Activated T-helper 1 cell treated with anti-CD3 and anti-CD28 coated beads, Interleukin-12 subunit alpha, Interleukin-12 subunit beta, Interleukin-2, Interleukin-4 antibody, amounts not matched to agents 30 ng/mL and 10 ng/mL and 1 ng/mL, durations not matched to agents 14 hours and 24 hours and 36 hours (primary cell): ENCODE measurements at regions of chr20 and their contacts with region 1.

Region 1: GRCh38 chr20:13638496-13639222 is at the start of gene TASP1:
- DNase-seq: peak; percentile 91
- H3K4me3 Mint-ChIP-seq: peak within 1 kb of the TSS; percentile 97
- H3K27ac Mint-ChIP-seq: peak within 1 kb of the TSS; percentile 71
- H3K4me1 Mint-ChIP-seq: peaks cover 30% of the 10 kb centered on the region
- H3K27me3 Mint-ChIP-seq: peaks cover 11% of the 10 kb centered on the region
- total RNA-seq, gene TASP1: 13.8 and 14.8 TPM in 2 replicates

Region 2: DNA sequence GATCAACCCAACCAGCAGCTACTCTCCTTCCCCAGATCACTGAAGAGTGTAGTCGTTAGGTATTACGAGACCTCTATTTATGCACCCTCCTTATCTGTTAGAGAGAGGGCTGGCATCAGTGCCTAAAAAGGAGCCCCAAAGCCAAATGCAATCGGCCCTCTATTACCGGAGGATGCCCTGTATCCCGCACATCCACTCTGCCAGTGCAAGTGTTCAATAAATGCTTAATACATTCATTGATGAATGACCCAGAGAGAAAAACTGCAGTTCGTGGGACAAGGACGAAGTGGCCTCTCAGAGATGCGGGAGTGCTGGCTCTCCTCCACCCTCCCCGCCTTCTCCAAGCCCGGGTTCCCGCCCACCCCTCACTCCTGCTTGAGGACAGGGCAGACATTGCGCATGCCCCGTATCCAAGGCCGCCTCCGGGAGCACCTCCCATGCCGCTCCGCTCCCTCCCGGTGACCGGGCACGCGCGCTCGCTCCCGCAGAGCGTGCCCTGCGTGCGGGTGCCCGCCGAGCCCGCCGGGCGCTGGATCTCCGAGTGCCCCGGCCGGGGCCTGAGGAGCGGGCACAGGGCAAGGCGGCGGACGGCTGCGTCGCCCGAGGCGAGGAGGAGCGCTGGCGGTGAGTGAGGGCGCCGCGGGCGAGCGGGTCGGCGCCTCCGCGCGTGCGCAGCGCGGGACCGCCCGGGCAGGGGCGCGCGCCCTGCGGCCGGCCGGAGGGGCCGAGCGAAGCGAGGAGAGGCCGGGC is 1748.2 kb before region 1 on chr20:
- intact Hi-C with region 1: loop called (anchors 5 kb)
- DNase-seq: peak; percentile 55
- H3K4me3 Mint-ChIP-seq: peak overlapping the region; percentile 82
- H3K27ac Mint-ChIP-seq: peak overlapping the region; percentile 1
- H3K4me1 Mint-ChIP-seq: peaks cover 25% of the 10 kb centered on the region
- H3K27me3 Mint-ChIP-seq: peaks cover 19% of the 10 kb centered on the region

Region 3: DNA sequence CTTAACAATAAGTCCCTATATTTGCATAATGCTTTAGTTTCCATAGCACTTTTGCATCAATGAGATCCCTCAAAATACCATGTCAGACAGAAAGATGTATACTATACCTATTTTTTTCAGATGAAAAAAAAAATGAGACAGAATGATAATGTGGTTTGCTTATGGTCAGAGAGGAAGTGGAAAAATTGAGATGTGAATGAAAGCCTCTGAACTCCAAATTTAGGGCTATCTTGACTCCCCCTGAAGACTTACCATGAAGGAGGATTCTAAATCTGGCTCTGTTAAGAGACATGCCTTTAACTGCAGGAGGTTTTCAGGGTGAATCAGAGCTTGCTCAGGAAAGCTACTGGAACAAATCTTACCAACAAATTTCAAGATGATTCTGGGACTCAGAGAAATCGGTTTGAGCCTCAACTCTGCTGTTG is 241.3 kb before region 1 on chr20:
- intact Hi-C with region 1: no loop called
- DNase-seq: no peak
- H3K4me3 Mint-ChIP-seq: no peak overlapping the region
- H3K27ac Mint-ChIP-seq: no peak overlapping the region
- H3K4me1 Mint-ChIP-seq: peaks cover 9% of the 10 kb centered on the region
- H3K27me3 Mint-ChIP-seq: no peaks in the 10 kb centered on the region

Region 4: DNA sequence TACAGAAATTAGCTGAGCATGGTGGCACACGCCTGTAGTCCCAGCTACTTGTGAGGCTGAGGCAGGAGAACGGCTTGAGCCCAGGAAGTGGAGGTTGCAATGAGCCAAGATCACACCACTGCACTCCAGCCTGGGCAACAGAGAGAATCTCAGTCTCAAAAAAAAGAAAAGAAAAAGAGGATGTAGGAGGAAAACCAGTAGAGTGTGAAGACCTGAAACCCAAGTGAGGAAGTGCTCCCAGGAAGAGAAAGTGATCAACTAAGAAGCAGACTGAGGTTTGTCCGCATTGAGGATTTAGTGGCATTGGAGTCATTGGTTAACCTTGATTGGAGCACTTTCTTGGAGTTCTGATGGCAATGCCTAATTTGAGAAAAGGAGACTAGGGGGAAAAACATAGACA is 20.6 kb after region 1 on chr20:
- intact Hi-C with region 1: no loop called
- DNase-seq: no peak
- H3K4me3 Mint-ChIP-seq: no peak overlapping the region
- H3K27ac Mint-ChIP-seq: no peak overlapping the region
- H3K4me1 Mint-ChIP-seq: no peaks in the 10 kb centered on the region
- H3K27me3 Mint-ChIP-seq: peaks cover 2% of the 10 kb centered on the region

Region 5: DNA sequence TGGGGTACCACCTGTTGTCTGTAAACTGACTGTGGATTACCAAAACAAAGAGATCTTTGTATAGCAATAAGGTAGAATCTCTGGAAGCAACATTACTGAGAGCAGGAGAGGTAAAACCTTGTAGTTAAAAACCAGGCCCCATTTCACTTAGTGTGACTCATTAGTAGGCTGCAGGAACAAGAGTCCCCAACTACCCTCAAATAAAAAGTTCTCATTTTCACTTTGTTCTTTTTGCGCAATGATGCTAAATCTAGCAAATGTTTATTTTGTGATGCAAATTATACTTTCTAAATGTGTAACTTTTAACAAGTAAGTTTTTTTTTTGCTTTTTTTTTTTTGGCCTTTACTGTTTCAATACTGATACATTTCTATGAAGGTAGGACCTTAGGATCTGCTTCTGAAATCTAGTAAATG is 79.0 kb after region 1 on chr20:
- intact Hi-C with region 1: loop called (anchors 5 kb)
- DNase-seq: no peak
- H3K4me3 Mint-ChIP-seq: no peak overlapping the region
- H3K27ac Mint-ChIP-seq: no peak overlapping the region
- H3K4me1 Mint-ChIP-seq: peaks cover 5% of the 10 kb centered on the region
- H3K27me3 Mint-ChIP-seq: no peaks in the 10 kb centered on the region

Region 6: GRCh38 chr20:13819885-13820645 is 181.4 kb after region 1 on chr20:
- intact Hi-C with region 1: loop called (anchors 1 kb)
- DNase-seq: no peak
- H3K4me3 Mint-ChIP-seq: no peak overlapping the region
- H3K27ac Mint-ChIP-seq: no peak overlapping the region
- H3K4me1 Mint-ChIP-seq: peaks cover 23% of the 10 kb centered on the region
- H3K27me3 Mint-ChIP-seq: no peaks in the 10 kb centered on the region